HCT116 (cell line): ENCODE measurements at regions of chr14 and their contacts with region 1.

Region 1: GRCh38 chr14:55446218-55446654 is 5.8 kb upstream of the TBPL2 start:
- DNase-seq: peak; percentile 76
- ATAC-seq: peak; percentile 29
- H3K4me3 ChIP-seq: peak overlapping the region in 1 of 2 experiments; percentile 34; a peak in 2 of 4 replicates
- H3K27ac ChIP-seq: peak overlapping the region; percentile 99
- H3K4me1 ChIP-seq: peaks cover 47 to 56% of the 10 kb centered on the region in 2 experiments
- H3K27me3 ChIP-seq: no peaks in the 10 kb centered on the region
- CTCF ChIP-seq: peak; percentile 62 to 86 (median 69); a peak in 5 of 6 replicates
- POLR2A ChIP-seq: no peak
- RAD21 ChIP-seq: peak; percentile 82

Region 2: DNA sequence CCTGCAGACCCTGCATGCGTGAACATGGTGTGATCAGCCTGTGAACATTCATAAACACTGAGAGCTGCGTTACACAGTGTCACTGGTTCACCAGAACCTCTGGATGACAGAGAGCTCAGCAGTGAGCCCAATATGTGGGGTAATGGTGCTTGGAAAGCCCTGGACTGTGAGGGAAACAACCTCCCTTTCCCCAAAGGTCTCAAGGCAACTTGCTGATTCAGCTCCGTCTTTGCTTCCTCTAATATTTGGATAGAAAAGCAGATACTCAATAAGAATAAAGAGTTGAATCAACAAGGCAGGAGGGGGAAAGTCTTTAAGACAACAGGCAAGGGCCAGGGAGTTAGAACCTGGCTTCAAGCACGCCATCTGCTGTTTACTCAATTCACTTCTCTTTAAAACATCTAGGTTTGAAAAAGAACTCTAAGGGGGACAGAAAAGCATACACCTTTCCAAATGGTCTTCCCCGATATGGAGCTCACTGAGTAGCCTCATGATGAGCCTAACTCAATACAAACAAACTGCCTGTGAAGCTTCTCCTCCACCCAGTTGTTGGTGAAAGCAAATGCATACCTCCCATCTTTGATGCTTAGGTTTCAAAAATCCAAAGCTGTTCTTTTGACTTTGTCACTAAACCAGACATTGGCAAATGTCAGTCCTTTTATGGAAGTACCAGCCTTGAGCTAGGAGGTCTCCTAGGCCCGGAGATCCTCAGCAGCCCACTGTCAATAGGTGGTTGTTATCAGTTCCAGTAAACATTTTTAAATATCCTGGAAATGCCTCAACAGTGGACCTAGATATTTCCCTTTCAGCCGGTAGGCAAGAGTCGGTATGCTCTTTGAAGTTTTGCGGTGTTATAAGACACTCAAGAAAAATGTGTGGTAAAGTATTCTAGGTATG is 803.2 kb before region 1 on chr14:
- CTCF ChIA-PET with region 1: no interaction called
- POLR2A ChIA-PET with region 1: no interaction called
- RAD21 ChIA-PET with region 1: no interaction called
- intact Hi-C with region 1: no loop called
- DNase-seq: no peak
- ATAC-seq: peak; percentile 69
- H3K4me3 ChIP-seq: peak overlapping the region in 1 of 2 experiments; percentile 9; a peak in 1 of 4 replicates
- H3K27ac ChIP-seq: peak overlapping the region; percentile 40; the same call in 1 of the 2 replicates
- H3K4me1 ChIP-seq: peaks cover 15 to 23% of the 10 kb centered on the region in 2 experiments
- H3K27me3 ChIP-seq: no peaks in the 10 kb centered on the region
- CTCF ChIP-seq: 0 out of 6 replicates have a peak, but pooled peaks of 1 of the 3 experiments have one; percentile 18
- POLR2A ChIP-seq: no peak
- RAD21 ChIP-seq: peak; percentile 40

Region 3: GRCh38 chr14:55019968-55020554 is 426.2 kb before region 1 on chr14:
- CTCF ChIA-PET with region 1: no interaction called
- POLR2A ChIA-PET with region 1: no interaction called
- RAD21 ChIA-PET with region 1: no interaction called
- intact Hi-C with region 1: no loop called
- DNase-seq: no peak
- ATAC-seq: no peak
- H3K4me3 ChIP-seq: no peak overlapping the region
- H3K27ac ChIP-seq: no peak overlapping the region
- H3K4me1 ChIP-seq: no peaks in the 10 kb centered on the region
- H3K27me3 ChIP-seq: no peaks in the 10 kb centered on the region
- CTCF ChIP-seq: no peak
- POLR2A ChIP-seq: no peak
- RAD21 ChIP-seq: no peak

Region 4: DNA sequence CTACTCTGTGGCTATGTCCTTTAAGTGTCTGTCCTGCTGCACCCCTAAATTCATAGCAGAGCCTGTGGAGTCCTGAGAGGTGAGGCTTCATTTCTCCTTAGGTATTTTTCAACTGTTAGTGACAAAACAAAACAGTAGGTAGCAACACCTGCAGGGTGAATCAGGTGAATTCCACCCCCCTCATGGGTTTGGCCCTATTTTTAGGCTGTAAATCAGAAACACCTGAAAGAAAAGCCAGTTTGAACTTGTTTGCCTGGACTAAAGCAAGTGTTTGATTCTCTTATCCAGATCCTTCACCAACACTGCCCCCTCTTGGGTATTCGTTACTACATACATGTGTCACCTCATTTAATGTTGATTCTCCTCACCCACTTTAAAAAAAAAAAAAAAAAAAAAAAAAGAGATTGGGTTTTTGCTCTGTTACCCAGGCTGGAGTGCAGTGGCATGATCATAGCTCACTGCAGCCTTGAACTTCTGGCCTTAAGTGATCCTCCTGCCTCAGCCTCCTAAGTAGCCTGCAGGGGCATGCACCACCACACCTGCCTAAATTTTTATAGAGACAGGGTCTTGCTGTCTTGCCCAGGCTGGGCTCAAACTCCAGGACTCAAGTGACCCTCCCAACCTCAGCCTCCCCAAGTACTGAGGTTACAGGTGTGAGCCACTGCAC is 16.1 kb before region 1 on chr14:
- CTCF ChIA-PET with region 1: interaction called, 11 read pairs
- POLR2A ChIA-PET with region 1: interaction called, 4 read pairs
- RAD21 ChIA-PET with region 1: interaction called in 1 of 2 experiments, 6 read pairs
- intact Hi-C with region 1: no loop called
- DNase-seq: peak; percentile 66
- ATAC-seq: peak; percentile 77
- H3K4me3 ChIP-seq: no peak overlapping the region
- H3K27ac ChIP-seq: no peak overlapping the region
- H3K4me1 ChIP-seq: peaks cover 7 to 21% of the 10 kb centered on the region in 2 experiments
- H3K27me3 ChIP-seq: no peaks in the 10 kb centered on the region
- CTCF ChIP-seq: peak; percentile 49 to 63 (median 57); a peak in 4 of 6 replicates
- POLR2A ChIP-seq: no peak
- RAD21 ChIP-seq: peak; percentile 77

Region 5: DNA sequence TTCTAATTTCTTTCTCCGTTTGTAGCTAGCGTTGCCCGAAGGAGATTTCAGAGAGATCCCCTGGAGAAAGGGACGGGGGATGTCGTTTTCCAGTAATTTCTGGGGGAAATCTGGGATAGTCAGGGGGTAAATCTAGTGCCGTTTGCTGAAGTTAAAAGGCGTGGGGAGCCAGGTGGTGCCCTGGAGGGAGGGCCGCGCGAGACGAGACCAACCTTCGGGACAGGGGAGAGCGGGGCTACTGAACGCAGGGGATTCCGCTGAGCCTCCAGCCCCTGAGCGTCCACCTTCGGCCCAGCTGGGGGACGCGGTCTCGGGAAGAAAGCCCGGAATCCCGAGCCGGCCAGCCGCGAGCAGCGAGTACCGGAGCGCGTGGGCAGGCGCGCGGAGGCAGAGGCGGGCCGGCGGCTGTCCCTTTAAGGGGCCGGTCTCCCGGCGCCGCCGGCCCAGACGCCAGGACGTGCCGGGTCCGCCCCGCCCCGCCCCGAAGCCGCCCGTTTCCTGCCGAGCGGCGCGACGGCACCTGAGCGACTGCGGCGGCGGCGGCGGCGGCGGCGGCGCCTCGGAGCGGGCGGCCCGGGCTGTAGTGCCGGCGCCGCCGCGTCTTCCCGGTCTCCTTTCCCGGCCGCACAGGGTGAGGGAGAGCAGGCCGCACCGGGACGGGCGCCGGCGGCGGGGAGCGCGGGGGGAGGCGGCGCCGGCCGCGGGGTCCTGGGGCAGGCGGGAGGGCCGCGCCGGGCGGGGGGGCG is 133.7 kb after region 1 on chr14 and contains the start of gene KTN1:
- CTCF ChIA-PET with region 1: interaction called, 6 read pairs
- POLR2A ChIA-PET with region 1: interaction called, 11 read pairs
- RAD21 ChIA-PET with region 1: interaction called in 1 of 2 experiments, 4 read pairs
- intact Hi-C with region 1: loop called (anchors 1 kb)
- DNase-seq: peak; percentile 48
- ATAC-seq: peak; percentile 88
- H3K4me3 ChIP-seq: peak within 1 kb of the TSS; percentile 80 to 89
- H3K27ac ChIP-seq: peak within 1 kb of the TSS; percentile 87
- H3K4me1 ChIP-seq: peaks cover 28 to 43% of the 10 kb centered on the region in 2 experiments
- H3K27me3 ChIP-seq: no peaks in the 10 kb centered on the region
- CTCF ChIP-seq: no peak
- POLR2A ChIP-seq: no peak
- RAD21 ChIP-seq: no peak
- total RNA-seq, gene KTN1: 105 TPM

Region 6: GRCh38 chr14:55585854-55586253 is 139.6 kb after region 1 on chr14:
- CTCF ChIA-PET with region 1: interaction called, 3 read pairs
- POLR2A ChIA-PET with region 1: interaction called, 11 read pairs
- RAD21 ChIA-PET with region 1: interaction called in 1 of 2 experiments, 4 read pairs
- intact Hi-C with region 1: loop called (anchors 1 kb)
- DNase-seq: no peak
- ATAC-seq: no peak
- H3K4me3 ChIP-seq: no peak overlapping the region
- H3K27ac ChIP-seq: no peak overlapping the region
- H3K4me1 ChIP-seq: peaks cover 39 to 65% of the 10 kb centered on the region in 2 experiments
- H3K27me3 ChIP-seq: no peaks in the 10 kb centered on the region
- CTCF ChIP-seq: no peak
- POLR2A ChIP-seq: no peak
- RAD21 ChIP-seq: no peak

Region 7: GRCh38 chr14:55599200-55599879 is 153.1 kb after region 1 on chr14:
- CTCF ChIA-PET with region 1: interaction called, 5 read pairs
- POLR2A ChIA-PET with region 1: interaction called, 5 read pairs
- RAD21 ChIA-PET with region 1: no interaction called
- intact Hi-C with region 1: loop called (anchors 5 kb)
- DNase-seq: peak; percentile 75
- ATAC-seq: peak; percentile 93
- H3K4me3 ChIP-seq: peak overlapping the region; percentile 35 to 55
- H3K27ac ChIP-seq: peak overlapping the region; percentile 63
- H3K4me1 ChIP-seq: peaks cover 35 to 46% of the 10 kb centered on the region in 2 experiments
- H3K27me3 ChIP-seq: no peaks in the 10 kb centered on the region
- CTCF ChIP-seq: no peak
- POLR2A ChIP-seq: no peak
- RAD21 ChIP-seq: peak; percentile 11; the same call in 1 of the 2 replicates

Region 8: GRCh38 chr14:55802986-55803872 is 357.0 kb after region 1 on chr14:
- CTCF ChIA-PET with region 1: no interaction called
- POLR2A ChIA-PET with region 1: no interaction called
- RAD21 ChIA-PET with region 1: no interaction called
- intact Hi-C with region 1: loop called (anchors 1 kb)
- DNase-seq: peak; percentile 91
- ATAC-seq: peak; percentile 77
- H3K4me3 ChIP-seq: peak overlapping the region; percentile 15 to 29
- H3K27ac ChIP-seq: peak overlapping the region; percentile 91
- H3K4me1 ChIP-seq: peaks cover 58 to 77% of the 10 kb centered on the region in 2 experiments
- H3K27me3 ChIP-seq: no peaks in the 10 kb centered on the region
- CTCF ChIP-seq: peak; percentile 25 to 49 (median 41); a peak in 5 of 6 replicates
- POLR2A ChIP-seq: peak; percentile 36
- RAD21 ChIP-seq: peak; percentile 56

Region 9: DNA sequence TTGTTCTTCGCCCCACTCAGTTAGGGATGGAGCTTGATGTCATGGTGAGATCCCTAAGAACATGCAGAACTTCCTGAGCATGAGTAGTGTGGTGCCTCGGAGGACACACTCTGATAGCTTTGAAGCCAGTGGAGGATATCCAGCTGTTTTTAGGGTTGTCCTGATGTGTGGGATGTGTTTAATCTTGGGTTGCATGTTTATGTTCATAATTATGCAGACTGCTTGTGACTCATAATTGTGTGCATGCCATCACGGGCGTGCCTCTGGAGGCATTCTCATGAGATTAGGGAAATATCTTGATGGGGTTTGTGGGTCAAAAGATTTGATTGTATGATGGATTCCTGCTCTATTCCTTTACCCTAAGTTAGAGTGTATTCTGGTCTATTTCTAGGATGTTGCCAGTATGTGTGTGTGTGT is 404.6 kb after region 1 on chr14:
- CTCF ChIA-PET with region 1: no interaction called
- POLR2A ChIA-PET with region 1: no interaction called
- RAD21 ChIA-PET with region 1: no interaction called
- intact Hi-C with region 1: loop called (anchors 10 kb)
- DNase-seq: no peak
- ATAC-seq: 0 out of 2 replicates have a peak, but pooled peaks have one; percentile 27
- H3K4me3 ChIP-seq: no peak overlapping the region
- H3K27ac ChIP-seq: no peak overlapping the region
- H3K4me1 ChIP-seq: peaks cover 8 to 29% of the 10 kb centered on the region in 2 experiments
- H3K27me3 ChIP-seq: no peaks in the 10 kb centered on the region
- CTCF ChIP-seq: no peak
- POLR2A ChIP-seq: no peak
- RAD21 ChIP-seq: no peak